BJ (cell line): ENCODE measurements at regions of chr17 and their contacts with region 1.

Region 1: GRCh38 chr17:47840740-47841603 is at the start of gene SCRN2:
- DNase-seq: no peak
- H3K4me3 ChIP-seq: peak within 1 kb of the TSS; percentile 63
- H3K27me3 ChIP-seq: peaks cover 2% of the 10 kb centered on the region
- CTCF ChIP-seq: peak; percentile 98
- polyA plus RNA-seq, gene SCRN2: 18.3 and 41.1 TPM in 2 replicates

Region 2: DNA sequence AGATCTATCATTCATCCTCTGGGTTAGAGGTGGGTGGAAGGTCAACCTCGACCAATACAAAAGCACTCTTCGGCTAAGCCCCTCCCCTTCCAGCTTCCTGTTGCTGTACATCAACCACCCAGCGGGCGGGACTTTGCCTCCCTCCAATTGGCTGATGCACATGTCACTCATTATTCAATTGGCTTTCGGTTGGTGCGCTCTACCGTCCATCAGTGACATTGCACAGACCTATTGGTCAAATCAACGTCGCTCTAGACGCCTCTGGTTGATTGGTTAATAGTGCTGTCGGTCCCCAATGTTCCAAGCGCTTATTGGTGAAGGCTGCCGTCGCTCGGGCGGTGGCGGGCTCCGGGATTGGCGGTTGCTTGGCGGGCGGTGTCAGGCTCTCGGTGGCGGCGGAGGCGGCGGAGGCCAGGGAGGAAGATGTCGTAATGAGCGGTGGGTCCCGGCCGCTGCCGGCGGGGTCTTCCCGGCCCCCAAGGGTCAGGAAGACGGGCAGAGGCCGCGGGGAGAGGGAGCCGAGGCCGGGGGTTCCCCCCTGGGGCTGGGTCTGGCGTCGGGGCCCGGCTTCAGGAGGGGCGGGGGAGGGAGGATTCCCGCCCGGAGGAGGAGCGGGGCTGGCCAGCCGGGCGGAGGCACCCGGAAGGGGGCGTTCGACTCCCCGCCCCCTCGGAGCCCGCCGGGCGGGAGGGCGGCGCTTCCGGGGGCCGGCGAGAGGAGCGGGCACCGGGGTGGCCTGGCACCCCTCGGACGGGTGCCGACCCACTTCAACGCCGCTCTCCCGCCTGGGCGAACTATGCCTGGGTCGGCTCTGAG is 55.1 kb after region 1 on chr17 and contains the start of gene SP2:
- CTCF ChIA-PET with region 1: interaction called, 875 read pairs
- POLR2A ChIA-PET with region 1: no interaction called
- DNase-seq: peak; percentile 100
- H3K4me3 ChIP-seq: peak within 1 kb of the TSS; percentile 80
- H3K27me3 ChIP-seq: no peaks in the 10 kb centered on the region
- CTCF ChIP-seq: no peak
- polyA plus RNA-seq, gene SP2: 4.0 and 5.9 TPM in 2 replicates

Region 3: GRCh38 chr17:47978324-47978723 is 137.4 kb after region 1 on chr17:
- CTCF ChIA-PET with region 1: interaction called, 11 read pairs
- POLR2A ChIA-PET with region 1: no interaction called
- DNase-seq: no peak
- H3K4me3 ChIP-seq: no peak overlapping the region
- H3K27me3 ChIP-seq: no peaks in the 10 kb centered on the region
- CTCF ChIP-seq: peak; percentile 81

Region 4: DNA sequence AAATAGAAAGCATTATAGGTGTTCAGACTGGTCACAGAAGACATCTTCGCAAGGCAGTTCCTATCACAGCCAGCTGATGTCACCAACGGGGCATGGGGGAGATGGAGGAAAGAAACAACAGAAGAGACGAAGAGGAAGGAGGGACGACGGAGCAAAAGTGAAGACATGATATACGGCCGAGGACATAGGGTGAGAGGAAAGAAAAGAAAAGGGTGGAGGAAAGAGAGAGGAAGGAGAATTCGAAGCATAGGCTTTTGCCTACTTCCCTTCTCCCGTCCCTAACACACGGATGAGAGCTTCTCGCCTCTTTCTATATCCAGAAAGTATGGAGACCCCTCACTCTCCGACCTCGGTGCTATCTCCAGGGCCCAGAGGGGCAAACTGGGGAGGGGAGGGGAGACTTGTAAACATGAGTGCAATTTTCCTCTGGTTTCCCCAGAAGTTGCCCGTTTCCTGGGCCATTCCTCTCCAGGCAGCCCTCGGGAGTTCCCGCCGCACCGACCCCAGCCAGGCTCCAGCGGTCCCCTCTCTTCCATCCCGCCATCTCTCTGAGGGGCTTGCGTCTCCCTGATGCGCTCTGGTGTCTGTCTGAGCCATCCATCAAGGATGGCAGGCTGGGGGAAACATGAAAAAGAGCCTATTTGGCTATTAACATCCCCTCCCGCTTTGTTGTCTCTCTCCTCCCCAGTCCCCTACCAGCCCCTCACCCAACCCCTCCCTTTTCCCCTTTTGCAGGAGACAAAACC is 170.6 kb after region 1 on chr17:
- CTCF ChIA-PET with region 1: interaction called, 19 read pairs
- POLR2A ChIA-PET with region 1: no interaction called
- DNase-seq: no peak
- H3K4me3 ChIP-seq: peak overlapping the region; percentile 40
- H3K27me3 ChIP-seq: no peaks in the 10 kb centered on the region; the same call in 1 of the 2 replicates
- CTCF ChIP-seq: peak; percentile 74

Region 5: DNA sequence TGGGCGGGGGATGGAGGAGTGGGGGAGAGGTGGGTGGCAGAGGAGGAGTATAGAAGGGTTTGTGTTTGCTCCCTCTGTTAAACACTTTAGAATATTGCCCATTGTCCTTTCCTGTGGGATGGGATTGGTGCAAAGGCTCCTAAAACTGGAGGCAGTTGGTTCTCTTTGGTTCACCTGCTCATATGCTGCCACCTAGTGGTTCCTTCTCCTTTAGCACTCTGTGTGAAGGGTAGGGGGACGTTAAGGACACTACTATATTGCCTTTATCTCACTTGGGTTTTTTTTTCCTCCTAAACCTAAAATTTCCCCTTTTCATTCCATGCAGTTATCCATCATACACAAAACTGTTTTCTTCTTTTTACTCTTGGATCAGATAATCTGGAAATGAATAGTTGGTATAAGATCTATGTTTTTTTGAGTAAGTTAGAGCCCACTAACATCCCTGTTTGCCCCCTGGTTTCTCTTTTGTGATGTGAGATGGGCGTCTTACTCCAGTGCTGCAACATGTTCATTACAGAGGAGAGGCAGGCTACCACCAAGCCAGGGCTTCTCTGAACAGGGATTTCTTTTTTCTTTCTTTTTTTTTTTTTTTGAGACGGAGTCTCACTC is 290.3 kb after region 1 on chr17:
- CTCF ChIA-PET with region 1: no interaction called
- POLR2A ChIA-PET with region 1: no interaction called
- DNase-seq: no peak
- H3K4me3 ChIP-seq: no peak overlapping the region
- H3K27me3 ChIP-seq: peaks cover 4% of the 10 kb centered on the region
- CTCF ChIP-seq: peak; percentile 87